Activated CD8-positive, alpha-beta T cell treated with anti-CD3 and anti-CD28 coated beads for 36 hours (primary cell): ENCODE measurements at regions of chr1 and their contacts with region 1.

Region 1: GRCh38 chr1:165768513-165769394 is at the start of gene TMCO1:
- DNase-seq: peak; percentile 97
- ATAC-seq: peak; percentile 99
- H3K4me3 Mint-ChIP-seq: peak within 1 kb of the TSS; percentile 100
- H3K27ac Mint-ChIP-seq: peak within 1 kb of the TSS; percentile 99
- H3K4me1 Mint-ChIP-seq: peaks cover 56% of the 10 kb centered on the region
- H3K27me3 Mint-ChIP-seq: no peaks in the 10 kb centered on the region
- CTCF ChIP-seq: no peak
- total RNA-seq, gene TMCO1: 57.9 to 60.8 TPM

Region 2: GRCh38 chr1:165697881-165698760 is 70.6 kb before region 1 on chr1 and contains the start of gene ALDH9A1:
- CTCF ChIA-PET with region 1: interaction called, 4 read pairs
- POLR2A ChIA-PET with region 1: interaction called, 13 read pairs
- intact Hi-C with region 1: no loop called
- DNase-seq: peak; percentile 91
- ATAC-seq: peak; percentile 91
- H3K4me3 Mint-ChIP-seq: peak within 1 kb of the TSS; percentile 83
- H3K27ac Mint-ChIP-seq: peak within 1 kb of the TSS; percentile 93
- H3K4me1 Mint-ChIP-seq: peaks cover 19% of the 10 kb centered on the region
- H3K27me3 Mint-ChIP-seq: peaks cover 2% of the 10 kb centered on the region
- CTCF ChIP-seq: no peak
- total RNA-seq, gene ALDH9A1: 25.6 to 28.2 TPM

Region 3: GRCh38 chr1:165827268-165828102 is 58.7 kb after region 1 on chr1 and contains the start of gene UCK2:
- CTCF ChIA-PET with region 1: interaction called, 6 read pairs
- POLR2A ChIA-PET with region 1: interaction called, 43 read pairs
- intact Hi-C with region 1: loop called (anchors 5 kb)
- DNase-seq: peak; percentile 80
- ATAC-seq: peak; percentile 85
- H3K4me3 Mint-ChIP-seq: peak within 1 kb of the TSS; percentile 99
- H3K27ac Mint-ChIP-seq: peak within 1 kb of the TSS; percentile 97
- H3K4me1 Mint-ChIP-seq: peaks cover 21% of the 10 kb centered on the region
- H3K27me3 Mint-ChIP-seq: no peaks in the 10 kb centered on the region
- CTCF ChIP-seq: no peak
- total RNA-seq, gene UCK2: 66.5 to 72.2 TPM

Region 4: DNA sequence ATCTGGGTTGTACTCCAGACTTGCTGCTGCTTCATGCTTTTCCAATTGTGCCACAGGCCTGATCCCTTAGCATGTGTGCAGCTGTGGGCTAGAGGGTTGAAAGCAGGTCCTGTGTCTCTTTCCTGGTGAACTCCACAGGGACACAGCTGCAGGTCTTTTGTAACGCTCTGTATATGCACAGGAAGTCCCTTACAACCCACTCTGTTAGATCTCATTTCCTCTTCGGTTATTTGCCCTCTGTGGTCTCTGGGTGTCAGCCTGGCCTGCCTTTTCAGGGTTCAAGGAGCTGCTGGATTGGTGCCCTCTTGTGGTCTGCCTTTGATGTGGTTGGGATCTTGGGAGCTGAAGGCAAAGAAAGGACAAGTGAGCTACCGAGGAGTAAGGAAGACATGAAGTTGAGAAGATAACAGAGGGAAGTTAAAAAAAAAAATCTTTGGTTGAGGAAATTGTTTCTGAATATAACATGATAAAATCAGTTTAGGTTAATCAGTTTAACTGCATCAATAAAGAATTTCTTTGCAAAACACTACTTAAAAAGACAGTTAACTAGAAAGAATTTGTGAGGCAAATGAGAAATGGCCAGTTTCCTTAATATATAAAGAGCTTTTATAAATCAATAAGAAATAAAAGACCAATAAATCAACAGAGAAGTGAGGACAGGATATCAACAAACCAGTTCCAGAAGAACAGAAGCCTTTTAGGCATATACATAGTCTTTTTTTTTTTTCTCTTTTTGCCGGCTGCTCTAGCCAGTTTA is 102.7 kb after region 1 on chr1:
- CTCF ChIA-PET with region 1: interaction called, 3 read pairs
- POLR2A ChIA-PET with region 1: no interaction called
- intact Hi-C with region 1: loop called (anchors 10 kb)
- DNase-seq: peak; percentile 72
- ATAC-seq: peak; percentile 85
- H3K4me3 Mint-ChIP-seq: no peak overlapping the region
- H3K27ac Mint-ChIP-seq: peak overlapping the region; percentile 18
- H3K4me1 Mint-ChIP-seq: peaks cover 44% of the 10 kb centered on the region
- H3K27me3 Mint-ChIP-seq: peaks cover 3% of the 10 kb centered on the region
- CTCF ChIP-seq: peak; percentile 16